ENCODE measurements at regions of chr6 and their contacts with region 1.

Region 1: GRCh38 chr6:81696482-81696881 is 56.0 kb downstream of the TENT5A start:
- DNase-seq: no peak
- H3K4me3 ChIP-seq: no peak overlapping the region
- CTCF ChIP-seq: no peak
- POLR2A ChIP-seq: no peak

Region 2: GRCh38 chr6:83258517-83258916 is 1562.0 kb after region 1 on chr6:
- intact Hi-C with region 1: loop called (anchors 5 kb)
- DNase-seq: no peak
- H3K4me3 ChIP-seq: no peak overlapping the region
- CTCF ChIP-seq: no peak
- POLR2A ChIP-seq: no peak